ENCODE measurements at regions of chr3 and their contacts with region 1.

Region 1: DNA sequence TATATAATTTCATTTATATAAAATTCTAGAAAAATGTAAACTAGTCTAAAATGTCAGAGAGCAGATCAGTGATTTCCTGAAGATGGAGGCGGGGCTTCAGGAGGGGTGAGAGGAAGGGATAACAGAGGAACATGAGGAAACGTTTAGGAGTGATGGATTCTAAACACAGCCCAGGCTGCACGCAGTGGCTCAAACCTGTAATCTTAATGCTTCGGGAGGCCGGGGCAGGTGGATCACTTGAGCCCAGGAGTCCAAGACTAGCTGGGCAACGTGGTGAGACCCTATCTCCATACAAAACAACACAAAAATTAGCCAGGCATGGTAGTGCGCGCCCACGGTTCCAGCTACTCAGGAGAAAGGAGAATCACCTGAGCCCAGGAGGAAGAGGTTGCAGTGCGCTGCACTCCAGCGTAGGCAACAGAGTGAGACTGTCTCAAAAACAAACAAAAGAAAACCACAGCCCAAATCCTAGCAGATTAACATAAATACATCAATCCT is 18.0 kb upstream of the IQCF1 start:
- DNase-seq: no peak
- H3K4me3 ChIP-seq: no peak overlapping the region
- H3K27ac ChIP-seq: no peak overlapping the region
- H3K4me1 ChIP-seq: no peaks in the 10 kb centered on the region
- H3K27me3 ChIP-seq: no peaks in the 10 kb centered on the region
- CTCF ChIP-seq: no peak
- POLR2A ChIP-seq: no peak

Region 2: GRCh38 chr3:52593103-52593502 is 672.0 kb after region 1 on chr3:
- intact Hi-C with region 1: loop called (anchors 5 kb)
- DNase-seq: no peak
- H3K4me3 ChIP-seq: no peak overlapping the region
- H3K27ac ChIP-seq: no peak overlapping the region
- H3K4me1 ChIP-seq: no peaks in the 10 kb centered on the region
- H3K27me3 ChIP-seq: no peaks in the 10 kb centered on the region
- CTCF ChIP-seq: no peak
- POLR2A ChIP-seq: no peak

Measured in breast epithelium (tissue), 4 donors.